Activated CD4-positive, alpha-beta memory T cell treated with anti-CD3 and anti-CD28 coated beads, Interleukin-2, amount 10 ng/mL, durations not matched to agents 7 days and 5 days (primary cell): ENCODE measurements at regions of chr10 and their contacts with region 1.

Region 1: GRCh38 chr10:84264611-84265141 is 19.8 kb downstream of the RGR start:
- DNase-seq: peak; percentile 75
- H3K4me3 Mint-ChIP-seq: no peak overlapping the region
- H3K27ac Mint-ChIP-seq: no peak overlapping the region
- H3K4me1 Mint-ChIP-seq: peaks cover 13% of the 10 kb centered on the region
- H3K27me3 Mint-ChIP-seq: peaks cover 26% of the 10 kb centered on the region

Region 2: DNA sequence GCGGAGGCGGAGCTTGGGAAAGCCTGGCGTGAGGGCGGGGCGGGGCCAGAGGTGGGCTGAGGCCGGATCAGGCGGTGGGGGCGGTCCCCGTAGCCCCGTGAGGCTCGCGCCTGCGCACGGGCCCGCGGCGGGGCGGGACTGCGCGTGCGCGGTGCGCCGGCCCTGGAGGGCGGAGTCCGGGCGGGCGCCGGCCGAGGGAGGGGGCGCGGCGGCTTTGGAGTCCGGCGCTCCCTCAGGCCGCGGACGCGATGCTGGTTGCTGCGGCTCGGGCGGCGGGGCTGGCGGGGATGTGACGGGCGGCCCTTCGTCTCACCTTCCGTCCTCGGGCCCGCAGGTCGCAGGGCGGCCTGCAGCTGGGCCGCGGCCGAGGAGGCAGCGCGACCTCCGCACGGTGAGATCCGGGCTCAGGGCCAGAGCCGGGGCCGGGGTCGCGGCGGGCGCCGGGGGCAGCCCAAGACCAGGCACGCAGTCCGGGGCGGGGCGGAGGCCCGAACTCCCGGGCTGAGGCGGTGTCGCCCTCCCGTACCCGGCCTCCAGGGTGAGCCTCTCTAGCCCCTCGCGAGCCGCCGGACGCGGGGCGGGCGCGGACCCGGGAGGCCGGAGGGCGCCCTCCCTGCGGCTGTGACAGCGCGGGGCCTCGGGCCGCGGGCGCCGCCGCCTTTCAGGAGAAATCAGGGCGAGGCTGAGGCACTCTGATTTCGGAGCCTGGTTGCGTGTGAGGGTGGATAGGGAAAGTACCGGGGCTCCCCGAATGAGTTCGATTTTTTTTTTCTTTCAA is 63.9 kb after region 1 on chr10 and contains the start of gene CCSER2:
- CTCF ChIA-PET with region 1: interaction called, 35 read pairs
- POLR2A ChIA-PET with region 1: interaction called, 10 read pairs
- DNase-seq: peak; percentile 94
- H3K4me3 Mint-ChIP-seq: peak within 1 kb of the TSS; percentile 86
- H3K27ac Mint-ChIP-seq: peak within 1 kb of the TSS; percentile 94
- H3K4me1 Mint-ChIP-seq: peaks cover 34% of the 10 kb centered on the region
- H3K27me3 Mint-ChIP-seq: peaks cover 10% of the 10 kb centered on the region
- total RNA-seq, gene CCSER2: 80.2 to 87.9 TPM

Region 3: GRCh38 chr10:84333864-84334451 is 69.3 kb after region 1 on chr10:
- CTCF ChIA-PET with region 1: interaction called, 35 read pairs
- POLR2A ChIA-PET with region 1: interaction called, 10 read pairs
- DNase-seq: peak; percentile 79
- H3K4me3 Mint-ChIP-seq: peak overlapping the region; percentile 55
- H3K27ac Mint-ChIP-seq: peak overlapping the region; percentile 86
- H3K4me1 Mint-ChIP-seq: peaks cover 50% of the 10 kb centered on the region
- H3K27me3 Mint-ChIP-seq: no peaks in the 10 kb centered on the region

Region 4: DNA sequence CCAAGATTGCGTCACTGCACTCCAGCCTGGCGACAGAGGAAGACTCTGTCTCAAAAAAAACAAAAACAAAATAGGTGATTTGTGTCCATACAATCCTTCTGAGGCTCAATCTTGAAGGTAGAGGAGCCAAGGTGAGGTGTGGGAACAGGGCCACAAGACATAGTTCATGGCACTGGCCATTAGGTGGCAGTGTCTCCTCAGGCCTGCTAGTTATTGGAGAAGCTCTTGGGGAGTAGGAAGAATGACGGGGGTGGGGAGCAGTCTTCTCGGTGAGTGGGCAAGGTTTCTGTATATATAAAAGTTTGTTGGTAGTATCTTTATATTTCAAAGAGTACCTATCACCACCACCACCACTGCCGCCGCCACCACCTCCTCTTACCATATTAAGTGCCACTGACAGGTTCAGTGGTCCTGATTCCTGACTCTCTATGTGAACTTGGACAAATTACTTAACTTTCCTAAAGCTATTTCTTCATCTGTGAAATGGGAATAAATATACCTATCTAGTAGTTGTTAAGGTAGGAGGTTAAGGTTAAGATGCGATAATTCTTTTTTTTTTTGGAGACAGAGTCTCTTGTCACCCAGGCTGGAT is 87.7 kb after region 1 on chr10:
- CTCF ChIA-PET with region 1: interaction called, 57 read pairs
- POLR2A ChIA-PET with region 1: no interaction called
- DNase-seq: peak; percentile 65
- H3K4me3 Mint-ChIP-seq: no peak overlapping the region
- H3K27ac Mint-ChIP-seq: no peak overlapping the region
- H3K4me1 Mint-ChIP-seq: peaks cover 38% of the 10 kb centered on the region
- H3K27me3 Mint-ChIP-seq: no peaks in the 10 kb centered on the region

Region 5: DNA sequence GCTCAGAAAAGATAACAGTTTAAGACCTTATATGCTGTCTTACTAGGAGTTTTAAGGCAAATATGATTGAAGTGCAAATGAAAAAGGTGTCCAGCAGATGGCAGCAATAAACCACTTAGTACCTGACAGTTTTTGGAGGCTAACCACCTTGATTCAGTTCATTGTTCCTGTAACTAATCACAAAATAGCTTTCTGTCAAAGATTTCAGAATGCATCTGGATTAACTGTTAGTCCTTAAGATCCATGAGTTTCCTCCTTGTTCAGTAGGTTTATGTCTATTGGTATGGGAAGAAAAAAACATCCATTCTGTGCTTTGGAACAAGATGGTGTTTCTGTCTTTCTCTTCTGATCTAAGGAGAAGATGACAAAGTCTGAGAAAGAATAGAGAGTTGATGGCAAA is 110.3 kb after region 1 on chr10:
- CTCF ChIA-PET with region 1: interaction called, 14 read pairs
- POLR2A ChIA-PET with region 1: interaction called, 3 read pairs
- DNase-seq: peak; percentile 30
- H3K4me3 Mint-ChIP-seq: no peak overlapping the region
- H3K27ac Mint-ChIP-seq: no peak overlapping the region
- H3K4me1 Mint-ChIP-seq: peaks cover 25% of the 10 kb centered on the region
- H3K27me3 Mint-ChIP-seq: no peaks in the 10 kb centered on the region

Region 6: DNA sequence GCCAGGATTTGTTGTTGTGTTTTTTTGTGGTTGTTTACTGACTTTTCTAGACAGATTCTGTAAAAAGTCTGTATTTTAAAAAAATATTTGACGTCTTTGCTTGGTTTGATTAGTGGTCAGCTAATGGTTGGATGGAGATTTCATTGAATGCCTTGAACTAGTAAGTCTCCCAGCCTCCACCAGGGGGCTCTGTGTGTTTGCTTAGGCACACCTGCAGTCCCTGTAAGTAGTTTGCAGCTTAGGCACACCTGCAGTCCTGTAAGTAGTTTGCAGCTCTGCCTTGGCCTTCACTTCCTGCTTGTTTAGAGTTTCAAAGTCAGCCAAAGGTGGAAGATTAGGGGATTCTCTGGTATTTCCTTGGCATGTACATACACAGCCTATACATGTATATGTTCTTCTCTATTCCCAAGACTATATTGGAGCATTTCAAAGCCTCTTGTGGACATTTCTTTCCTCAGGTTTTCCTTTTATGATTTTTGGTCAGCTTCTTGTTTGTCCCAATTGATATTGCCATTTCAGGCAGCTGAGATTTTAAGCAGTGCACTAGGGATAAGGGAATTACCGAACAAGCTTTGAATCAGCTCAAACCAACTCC is 165.3 kb after region 1 on chr10:
- CTCF ChIA-PET with region 1: interaction called, 13 read pairs
- POLR2A ChIA-PET with region 1: no interaction called
- DNase-seq: peak; percentile 68
- H3K4me3 Mint-ChIP-seq: no peak overlapping the region
- H3K27ac Mint-ChIP-seq: no peak overlapping the region
- H3K4me1 Mint-ChIP-seq: peaks cover 9% of the 10 kb centered on the region
- H3K27me3 Mint-ChIP-seq: no peaks in the 10 kb centered on the region

Region 7: GRCh38 chr10:84447701-84448400 is 183.2 kb after region 1 on chr10:
- CTCF ChIA-PET with region 1: no interaction called
- POLR2A ChIA-PET with region 1: no interaction called
- DNase-seq: no peak
- H3K4me3 Mint-ChIP-seq: no peak overlapping the region
- H3K27ac Mint-ChIP-seq: no peak overlapping the region
- H3K4me1 Mint-ChIP-seq: no peaks in the 10 kb centered on the region
- H3K27me3 Mint-ChIP-seq: no peaks in the 10 kb centered on the region